CD4-positive, alpha-beta memory T cell (primary cell): ENCODE measurements at regions of chr19 and their contacts with region 1.

Region 1: GRCh38 chr19:925526-926322 is at the start of gene ARID3A:
- DNase-seq: peak; percentile 73 to 85 (median 78)
- H3K4me3 ChIP-seq: peak within 1 kb of the TSS; percentile 47 to 91
- H3K4me3 Mint-ChIP-seq: peak within 1 kb of the TSS; percentile 80 to 88 (median 84)
- H3K27ac ChIP-seq: peak within 1 kb of the TSS; percentile 64
- H3K27ac Mint-ChIP-seq: peak within 1 kb of the TSS in 6 of 7 donors; percentile 37 to 88 (median 72)
- H3K4me1 ChIP-seq: peaks cover 22% of the 10 kb centered on the region
- H3K4me1 Mint-ChIP-seq: peaks cover 8 to 21% (median 13%) of the 10 kb centered on the region in 4 donors
- H3K27me3 ChIP-seq: no peaks in the 10 kb centered on the region
- H3K27me3 Mint-ChIP-seq: peaks cover 0 to under 1% of the 10 kb centered on the region in 2 donors
- total RNA-seq, gene ARID3A: 9.2 to 9.6 TPM

Region 2: DNA sequence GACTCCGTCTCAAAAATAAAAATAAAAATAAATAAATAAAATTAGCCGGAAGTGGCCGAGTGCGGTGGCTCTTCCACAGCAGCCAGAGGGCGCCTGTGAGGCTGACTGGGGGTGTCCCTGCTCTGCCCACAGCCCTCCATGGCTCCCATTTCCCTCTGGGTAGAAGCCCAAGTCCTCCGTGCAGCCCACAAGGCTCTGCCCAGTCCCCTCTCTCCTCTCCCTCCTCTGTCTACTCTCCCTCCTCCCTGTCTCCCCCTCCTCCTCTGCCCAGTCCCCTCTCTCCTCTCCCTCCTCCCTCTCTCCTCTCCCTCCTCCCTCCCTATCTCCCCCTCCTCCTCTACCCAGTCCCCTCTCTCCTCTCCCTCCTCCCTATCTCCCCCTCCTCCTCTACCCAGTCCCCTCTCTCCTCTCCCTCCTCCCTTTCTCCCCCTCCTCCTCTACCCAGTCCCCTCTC is 154.4 kb before region 1 on chr19:
- CTCF ChIA-PET with region 1: interaction called, 19 read pairs
- POLR2A ChIA-PET with region 1: no interaction called
- intact Hi-C with region 1: loop called (anchors 1 kb)
- DNase-seq: peak in 3 of 5 donors; percentile 15 to 18 (median 17)
- H3K4me3 ChIP-seq: no peak overlapping the region
- H3K4me3 Mint-ChIP-seq: no peak overlapping the region
- H3K27ac ChIP-seq: no peak overlapping the region
- H3K27ac Mint-ChIP-seq: no peak overlapping the region
- H3K4me1 ChIP-seq: no peaks in the 10 kb centered on the region
- H3K4me1 Mint-ChIP-seq: peaks cover 0 to 4% (median 2%) of the 10 kb centered on the region in 4 donors
- H3K27me3 ChIP-seq: no peaks in the 10 kb centered on the region
- H3K27me3 Mint-ChIP-seq: peaks cover 4% of the 10 kb centered on the region in 2 donors

Region 3: DNA sequence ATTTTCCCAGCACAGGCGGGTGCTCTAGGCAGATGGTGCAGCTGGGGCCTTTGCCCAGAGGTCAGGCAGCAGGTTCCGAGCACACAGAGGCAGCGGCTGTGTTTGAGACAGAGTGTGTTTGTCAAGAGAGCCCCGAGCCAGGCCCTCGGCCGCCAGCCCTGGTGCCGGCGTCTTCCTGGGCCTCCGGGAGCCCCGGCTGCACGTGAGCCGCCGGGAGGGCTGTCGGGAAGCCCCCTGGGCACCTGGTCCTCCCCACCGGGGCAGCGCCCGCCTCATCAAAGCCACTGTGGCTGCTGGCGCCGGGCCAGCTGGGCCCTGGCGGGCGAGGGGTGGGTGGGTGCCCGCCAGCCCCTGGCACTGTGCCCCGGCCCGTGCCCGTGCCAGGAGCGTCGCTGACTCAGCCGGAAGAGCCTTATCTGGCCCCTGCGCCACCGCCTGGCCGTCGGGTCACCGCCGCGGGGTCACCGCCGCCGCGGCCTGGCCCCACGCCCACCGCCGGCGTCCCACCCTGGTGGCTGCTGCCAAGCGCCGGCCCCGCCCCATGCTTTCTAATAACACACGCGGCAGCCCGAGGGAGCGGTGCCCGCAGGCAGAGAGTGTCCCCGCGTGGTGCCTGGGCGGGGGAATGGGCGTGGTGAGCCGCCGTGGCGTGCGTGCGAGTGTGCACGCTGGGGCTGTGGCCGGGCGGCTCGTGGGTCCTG is 15.0 kb after region 1 on chr19:
- CTCF ChIA-PET with region 1: interaction called, 8 read pairs
- POLR2A ChIA-PET with region 1: interaction called, 6 read pairs
- intact Hi-C with region 1: loop called (anchors 2 kb)
- DNase-seq: peak; percentile 70 to 83 (median 72)
- H3K4me3 ChIP-seq: peak overlapping the region; percentile 29 to 38
- H3K4me3 Mint-ChIP-seq: peak overlapping the region; percentile 63 to 83 (median 78)
- H3K27ac ChIP-seq: peak overlapping the region; percentile 43
- H3K27ac Mint-ChIP-seq: peak overlapping the region; percentile 72 to 91 (median 81)
- H3K4me1 ChIP-seq: peaks cover 21% of the 10 kb centered on the region
- H3K4me1 Mint-ChIP-seq: peaks cover 14 to 32% (median 23%) of the 10 kb centered on the region in 4 donors
- H3K27me3 ChIP-seq: no peaks in the 10 kb centered on the region
- H3K27me3 Mint-ChIP-seq: no peaks in the 10 kb centered on the region

Region 4: DNA sequence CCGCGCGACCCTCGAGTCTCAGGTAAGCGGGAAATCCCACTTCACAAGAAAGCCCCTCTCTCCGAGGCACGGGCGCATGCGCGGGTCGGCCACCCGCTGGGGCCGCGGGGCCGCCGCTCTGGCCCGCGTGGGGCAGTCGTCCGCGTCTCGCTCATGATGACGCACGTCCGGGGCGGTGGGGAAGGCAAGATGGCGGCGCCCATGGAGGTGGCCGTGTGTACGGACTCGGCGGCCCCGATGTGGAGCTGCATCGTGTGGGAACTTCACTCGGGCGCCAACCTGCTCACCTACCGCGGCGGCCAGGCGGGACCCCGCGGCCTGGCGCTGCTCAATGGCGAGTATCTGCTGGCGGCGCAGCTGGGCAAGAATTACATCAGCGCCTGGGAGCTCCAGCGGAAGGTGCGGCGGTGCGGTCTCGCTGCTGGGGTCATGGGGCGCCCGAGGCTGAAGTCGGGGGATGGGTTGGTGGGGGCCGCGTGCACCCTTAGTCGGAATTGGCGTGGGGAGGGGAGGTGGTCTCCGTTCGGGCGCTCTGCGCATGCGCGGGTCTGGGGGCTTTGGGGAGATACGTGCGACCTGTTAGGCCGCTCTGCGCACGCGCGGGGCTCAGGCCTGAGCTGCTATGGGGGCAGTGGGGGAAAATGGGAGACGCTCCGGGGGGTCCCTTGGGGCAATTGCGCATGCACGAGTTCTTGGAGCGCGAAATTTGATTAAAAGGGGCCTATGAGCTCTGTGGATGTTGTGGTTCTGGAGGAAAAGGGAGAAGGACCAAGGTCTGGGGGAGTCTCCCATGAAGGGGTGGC is 58.6 kb after region 1 on chr19 and contains the start of gene WDR18:
- CTCF ChIA-PET with region 1: interaction called, 118 read pairs
- POLR2A ChIA-PET with region 1: interaction called, 88 read pairs
- intact Hi-C with region 1: loop called (anchors 1 kb)
- DNase-seq: peak; percentile 79 to 87 (median 81)
- H3K4me3 ChIP-seq: peak within 1 kb of the TSS; percentile 65 to 69
- H3K4me3 Mint-ChIP-seq: peak within 1 kb of the TSS; percentile 89 to 96 (median 92)
- H3K27ac ChIP-seq: peak within 1 kb of the TSS; percentile 75
- H3K27ac Mint-ChIP-seq: peak within 1 kb of the TSS; percentile 84 to 96 (median 90)
- H3K4me1 ChIP-seq: peaks cover 24% of the 10 kb centered on the region
- H3K4me1 Mint-ChIP-seq: peaks cover 4 to 18% (median 12%) of the 10 kb centered on the region in 4 donors
- H3K27me3 ChIP-seq: no peaks in the 10 kb centered on the region
- H3K27me3 Mint-ChIP-seq: no peaks in the 10 kb centered on the region
- total RNA-seq, gene WDR18: 53.9 to 60.3 TPM

Region 5: GRCh38 chr19:1001538-1002166 is 75.9 kb after region 1 on chr19:
- CTCF ChIA-PET with region 1: interaction called, 4 read pairs
- POLR2A ChIA-PET with region 1: interaction called, 5 read pairs
- intact Hi-C with region 1: loop called (anchors 1 kb)
- DNase-seq: peak; percentile 60 to 71 (median 61)
- H3K4me3 ChIP-seq: no peak overlapping the region
- H3K4me3 Mint-ChIP-seq: no peak overlapping the region
- H3K27ac ChIP-seq: no peak overlapping the region
- H3K27ac Mint-ChIP-seq: peak overlapping the region in 1 of 7 donors; percentile 21
- H3K4me1 ChIP-seq: peaks cover 15% of the 10 kb centered on the region
- H3K4me1 Mint-ChIP-seq: peaks cover 2 to 18% (median 10%) of the 10 kb centered on the region in 4 donors
- H3K27me3 ChIP-seq: peaks cover 26% of the 10 kb centered on the region
- H3K27me3 Mint-ChIP-seq: peaks cover 17 to 19% of the 10 kb centered on the region in 2 donors

Region 6: GRCh38 chr19:1094975-1095701 is 169.4 kb after region 1 on chr19 and contains the start of gene POLR2E:
- CTCF ChIA-PET with region 1: no interaction called
- POLR2A ChIA-PET with region 1: no interaction called
- intact Hi-C with region 1: loop called (anchors 10 kb)
- DNase-seq: peak; percentile 97 to 99 (median 98)
- H3K4me3 ChIP-seq: peak within 1 kb of the TSS; percentile 54 to 65
- H3K4me3 Mint-ChIP-seq: peak within 1 kb of the TSS; percentile 83 to 96 (median 90)
- H3K27ac ChIP-seq: peak within 1 kb of the TSS; percentile 85
- H3K27ac Mint-ChIP-seq: peak within 1 kb of the TSS; percentile 87 to 97 (median 93)
- H3K4me1 ChIP-seq: peaks cover 44% of the 10 kb centered on the region
- H3K4me1 Mint-ChIP-seq: peaks cover 22 to 75% (median 46%) of the 10 kb centered on the region in 4 donors
- H3K27me3 ChIP-seq: no peaks in the 10 kb centered on the region
- H3K27me3 Mint-ChIP-seq: no peaks in the 10 kb centered on the region
- total RNA-seq, gene POLR2E: 76.0 to 80.0 TPM

Region 7: GRCh38 chr19:1241417-1242095 is 315.8 kb after region 1 on chr19 and contains the start of gene ATP5F1D:
- CTCF ChIA-PET with region 1: no interaction called
- POLR2A ChIA-PET with region 1: no interaction called
- intact Hi-C with region 1: loop called (anchors 1 kb)
- DNase-seq: peak; percentile 84 to 88 (median 86)
- H3K4me3 ChIP-seq: peak within 1 kb of the TSS; percentile 29 to 59
- H3K4me3 Mint-ChIP-seq: peak within 1 kb of the TSS; percentile 89 to 95 (median 92)
- H3K27ac ChIP-seq: peak within 1 kb of the TSS; percentile 72
- H3K27ac Mint-ChIP-seq: peak within 1 kb of the TSS; percentile 94 to 99 (median 98)
- H3K4me1 ChIP-seq: peaks cover 59% of the 10 kb centered on the region
- H3K4me1 Mint-ChIP-seq: peaks cover 12 to 52% (median 33%) of the 10 kb centered on the region in 4 donors
- H3K27me3 ChIP-seq: no peaks in the 10 kb centered on the region
- H3K27me3 Mint-ChIP-seq: peaks cover 6 to 10% of the 10 kb centered on the region in 2 donors
- total RNA-seq, gene ATP5F1D: 105 to 108 TPM